PC-9 (cell line): ENCODE measurements at regions of chr3 and their contacts with region 1.

Region 1: GRCh38 chr3:194592798-194593752 is 40.1 kb downstream of the TMEM44 start:
- DNase-seq: peak; percentile 81 to 100
- H3K4me3 ChIP-seq: no peak overlapping the region
- H3K27ac ChIP-seq: peak overlapping the region; percentile 59
- H3K4me1 ChIP-seq: peaks cover 22% of the 10 kb centered on the region
- H3K27me3 ChIP-seq: no peaks in the 10 kb centered on the region
- CTCF ChIP-seq: no peak

Region 2: GRCh38 chr3:193499119-193499770 is 1093.8 kb before region 1 on chr3:
- CTCF ChIA-PET with region 1: no interaction called
- POLR2A ChIA-PET with region 1: no interaction called
- intact Hi-C with region 1: no loop called
- DNase-seq: no peak
- H3K4me3 ChIP-seq: no peak overlapping the region
- H3K27ac ChIP-seq: no peak overlapping the region
- H3K4me1 ChIP-seq: no peaks in the 10 kb centered on the region
- H3K27me3 ChIP-seq: peaks cover 21% of the 10 kb centered on the region; the same call in 1 of the 2 replicates
- CTCF ChIP-seq: no peak

Region 3: GRCh38 chr3:194472290-194472920 is 120.7 kb before region 1 on chr3:
- CTCF ChIA-PET with region 1: interaction called, 27 read pairs
- POLR2A ChIA-PET with region 1: no interaction called
- intact Hi-C with region 1: loop called (anchors 1 kb)
- DNase-seq: peak; percentile 31 to 67
- H3K4me3 ChIP-seq: no peak overlapping the region
- H3K27ac ChIP-seq: no peak overlapping the region
- H3K4me1 ChIP-seq: no peaks in the 10 kb centered on the region
- H3K27me3 ChIP-seq: no peaks in the 10 kb centered on the region
- CTCF ChIP-seq: peak; percentile 98

Region 4: GRCh38 chr3:194512895-194513601 is 80.0 kb before region 1 on chr3:
- CTCF ChIA-PET with region 1: interaction called, 5 read pairs
- POLR2A ChIA-PET with region 1: interaction called, 5 read pairs
- intact Hi-C with region 1: loop called (anchors 1 kb)
- DNase-seq: peak; percentile 96 to 99
- H3K4me3 ChIP-seq: no peak overlapping the region
- H3K27ac ChIP-seq: peak overlapping the region; percentile 56
- H3K4me1 ChIP-seq: peaks cover 45% of the 10 kb centered on the region
- H3K27me3 ChIP-seq: no peaks in the 10 kb centered on the region
- CTCF ChIP-seq: no peak

Region 5: GRCh38 chr3:194561306-194561974 is 31.6 kb before region 1 on chr3:
- CTCF ChIA-PET with region 1: no interaction called
- POLR2A ChIA-PET with region 1: interaction called, 9 read pairs
- intact Hi-C with region 1: loop called (anchors 1 kb)
- DNase-seq: peak; percentile 69 to 96
- H3K4me3 ChIP-seq: no peak overlapping the region
- H3K27ac ChIP-seq: peak overlapping the region; percentile 69
- H3K4me1 ChIP-seq: peaks cover 17% of the 10 kb centered on the region
- H3K27me3 ChIP-seq: no peaks in the 10 kb centered on the region
- CTCF ChIP-seq: no peak

Region 6: GRCh38 chr3:194607592-194608389 is 14.7 kb after region 1 on chr3:
- CTCF ChIA-PET with region 1: interaction called, 10 read pairs
- POLR2A ChIA-PET with region 1: no interaction called
- intact Hi-C with region 1: no loop called
- DNase-seq: no peak
- H3K4me3 ChIP-seq: no peak overlapping the region
- H3K27ac ChIP-seq: no peak overlapping the region
- H3K4me1 ChIP-seq: no peaks in the 10 kb centered on the region
- H3K27me3 ChIP-seq: no peaks in the 10 kb centered on the region
- CTCF ChIP-seq: no peak